Esophagus squamous epithelium (tissue), 5 donors: ENCODE measurements at regions of chr20 and their contacts with region 1.

Region 1: GRCh38 chr20:19692685-19693119 is 65.4 kb upstream of the RIN2 start:
- DNase-seq: no peak
- H3K4me3 ChIP-seq: peak overlapping the region in 1 of 4 donors; percentile 22
- H3K27ac ChIP-seq: peak overlapping the region in 1 of 4 donors; percentile 4
- H3K4me1 ChIP-seq: peaks cover 0 to 21% (median 0%) of the 10 kb centered on the region in 3 donors
- H3K27me3 ChIP-seq: no peaks in the 10 kb centered on the region
- CTCF ChIP-seq: peak; percentile 80 to 97 (median 92)
- POLR2A ChIP-seq: no peak

Region 2: DNA sequence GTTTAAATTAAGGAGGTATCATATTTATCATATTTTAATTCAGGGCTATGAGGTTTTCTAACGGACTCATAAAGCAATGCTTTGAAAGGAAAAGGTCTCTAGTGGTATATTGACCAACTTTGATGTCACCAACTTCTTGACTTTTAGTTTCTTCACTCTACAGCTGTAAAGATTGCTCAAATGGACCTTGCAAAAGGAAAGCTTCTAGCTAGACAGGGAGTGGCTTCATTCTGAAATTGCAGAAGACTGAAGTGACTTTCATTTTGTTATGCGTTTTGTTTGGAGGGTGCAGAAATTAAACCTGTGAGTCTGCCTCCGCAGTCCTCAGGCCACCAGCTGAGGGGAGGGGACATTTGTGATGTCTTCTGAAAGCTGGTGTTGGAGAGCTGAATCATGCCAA is 384.6 kb before region 1 on chr20:
- intact Hi-C with region 1: no loop called
- DNase-seq: no peak
- H3K4me3 ChIP-seq: no peak overlapping the region
- H3K27ac ChIP-seq: no peak overlapping the region
- H3K4me1 ChIP-seq: peaks cover 0 to 21% (median 20%) of the 10 kb centered on the region in 3 donors
- H3K27me3 ChIP-seq: no peaks in the 10 kb centered on the region
- CTCF ChIP-seq: no peak
- POLR2A ChIP-seq: no peak

Region 3: DNA sequence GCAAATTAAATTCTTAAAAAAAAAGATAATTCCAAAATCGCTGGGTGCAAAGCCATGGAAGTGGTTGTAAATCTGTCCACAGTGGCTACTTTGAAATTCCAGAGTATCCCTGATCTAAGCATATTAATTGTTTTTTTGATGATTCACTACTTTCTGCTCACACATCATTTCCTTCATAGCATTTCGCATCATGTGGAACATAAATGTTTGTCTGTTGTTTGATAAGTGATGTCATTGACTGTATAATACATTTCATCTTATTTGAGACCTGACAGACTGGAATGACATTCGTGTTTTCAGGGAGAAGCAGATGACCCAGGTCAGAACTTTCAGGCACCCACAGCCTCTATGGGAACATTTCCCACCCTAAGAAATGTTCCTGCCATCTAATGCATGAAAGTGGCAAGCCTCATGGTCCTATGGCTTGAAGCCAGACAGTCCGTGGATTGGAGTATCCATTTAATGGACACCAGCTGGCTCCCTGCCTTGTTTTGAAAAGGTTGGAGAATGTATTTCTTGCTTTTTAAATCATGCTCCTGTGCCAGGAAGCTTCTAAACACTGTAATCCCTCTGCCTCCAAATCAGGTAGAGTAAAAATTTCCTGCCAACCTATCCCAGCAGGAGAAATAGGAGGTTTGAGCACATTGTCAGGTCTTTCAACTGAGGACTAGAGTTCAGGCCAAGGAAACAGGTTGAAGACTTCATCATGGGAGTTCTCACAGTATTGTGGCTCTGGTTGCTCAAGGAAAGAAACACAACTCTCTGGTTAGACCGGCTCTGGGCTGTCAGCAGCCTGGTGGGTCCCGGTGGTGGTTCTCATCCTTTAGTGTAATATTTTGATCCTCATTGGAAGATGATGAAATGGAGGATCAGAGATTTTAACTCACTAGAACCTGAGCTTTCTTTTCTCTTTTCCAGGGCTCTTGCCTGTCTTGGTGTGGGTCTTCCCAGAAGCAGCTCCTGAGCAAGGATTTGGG is 322.3 kb before region 1 on chr20:
- intact Hi-C with region 1: no loop called
- DNase-seq: no peak
- H3K4me3 ChIP-seq: no peak overlapping the region
- H3K27ac ChIP-seq: peak overlapping the region in 1 of 4 donors; percentile 45
- H3K4me1 ChIP-seq: peaks cover 0 to 6% (median 0%) of the 10 kb centered on the region in 3 donors
- H3K27me3 ChIP-seq: no peaks in the 10 kb centered on the region
- CTCF ChIP-seq: no peak
- POLR2A ChIP-seq: no peak

Region 4: DNA sequence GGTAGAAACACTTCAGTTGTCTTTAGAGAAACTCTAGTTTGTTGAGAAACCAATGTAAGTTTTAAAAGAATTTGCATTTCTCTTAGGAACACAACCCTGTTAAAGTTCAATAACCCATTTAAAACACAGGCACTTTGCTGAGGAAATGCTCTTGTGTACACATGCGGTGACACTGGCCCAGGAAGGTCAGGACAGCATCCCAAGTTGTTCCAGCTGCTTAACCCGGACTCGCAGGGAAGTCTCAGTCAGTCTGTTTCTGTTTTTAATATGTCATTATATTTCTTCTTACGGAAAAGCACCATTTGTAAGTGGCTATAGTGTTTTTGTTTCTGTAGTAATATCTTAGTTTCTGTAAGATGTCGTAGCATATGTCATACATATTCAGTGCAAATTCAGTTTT is 102.2 kb after region 1 on chr20:
- intact Hi-C with region 1: no loop called
- DNase-seq: no peak
- H3K4me3 ChIP-seq: no peak overlapping the region
- H3K27ac ChIP-seq: no peak overlapping the region
- H3K4me1 ChIP-seq: no peaks in the 10 kb centered on the region
- H3K27me3 ChIP-seq: no peaks in the 10 kb centered on the region
- CTCF ChIP-seq: no peak
- POLR2A ChIP-seq: no peak

Region 5: GRCh38 chr20:20017001-20017843 is 324.5 kb after region 1 on chr20 and contains the start of gene NAA20:
- intact Hi-C with region 1: loop called (anchors 5 kb)
- DNase-seq: peak; percentile 42
- H3K4me3 ChIP-seq: peak within 1 kb of the TSS; percentile 72 to 99 (median 84)
- H3K27ac ChIP-seq: peak within 1 kb of the TSS; percentile 81 to 96 (median 94)
- H3K4me1 ChIP-seq: peaks cover 20 to 69% (median 38%) of the 10 kb centered on the region in 3 donors
- H3K27me3 ChIP-seq: no peaks in the 10 kb centered on the region
- CTCF ChIP-seq: peak; percentile 69 to 92 (median 88)
- POLR2A ChIP-seq: peak in 2 of 4 donors; percentile 47 to 68
- total RNA-seq, gene NAA20: 115 to 164 (median 139) TPM